ENCODE measurements at regions of chr15 and their contacts with region 1.

Region 1: GRCh38 chr15:68672781-68673205 is 94.0 kb downstream of the CORO2B start:
- DNase-seq: no peak
- H3K4me3 Mint-ChIP-seq: no peak overlapping the region
- H3K27ac Mint-ChIP-seq: no peak overlapping the region
- H3K4me1 Mint-ChIP-seq: peaks cover 8% of the 10 kb centered on the region
- H3K27me3 Mint-ChIP-seq: no peaks in the 10 kb centered on the region
- CTCF ChIP-seq: no peak

Region 2: DNA sequence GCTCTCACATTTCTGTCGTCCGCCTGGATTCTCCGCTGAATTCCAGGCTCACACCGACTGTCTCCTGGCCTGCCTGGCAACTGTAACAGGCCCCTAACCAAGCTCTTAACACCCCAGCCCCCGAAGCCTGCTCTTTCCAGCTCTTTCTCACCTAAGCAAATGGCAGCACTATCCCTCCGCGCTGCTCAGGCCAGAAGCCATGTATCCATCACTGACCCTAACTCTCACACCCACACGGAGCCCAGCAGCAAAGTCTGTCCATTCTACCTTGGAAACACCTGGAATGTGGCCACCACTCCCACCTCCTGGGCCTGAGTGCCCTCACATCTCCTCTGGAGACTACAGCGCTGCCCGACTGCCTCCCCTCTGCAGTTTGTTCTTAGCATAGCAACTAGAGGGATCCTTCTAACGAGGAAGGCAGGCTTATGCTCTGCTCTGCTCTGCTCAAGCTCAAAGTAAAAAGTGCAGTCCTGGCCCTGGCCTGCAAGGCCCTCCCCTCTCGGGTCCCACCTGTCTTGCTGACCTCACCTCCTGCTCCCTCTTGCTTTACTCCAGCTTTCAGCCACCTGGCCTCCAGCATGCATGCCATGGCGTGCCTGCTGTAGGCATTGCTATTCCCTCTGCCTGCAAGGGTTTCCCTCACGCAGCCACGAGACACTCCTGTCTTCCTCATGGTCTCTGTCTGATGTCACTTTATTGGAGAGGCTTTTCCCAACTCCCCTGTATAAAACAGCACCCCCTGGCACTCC is 368.0 kb before region 1 on chr15:
- CTCF ChIA-PET with region 1: interaction called, 10 read pairs
- POLR2A ChIA-PET with region 1: interaction called, 4 read pairs
- intact Hi-C with region 1: loop called (anchors 1 kb)
- DNase-seq: no peak
- H3K4me3 Mint-ChIP-seq: no peak overlapping the region
- H3K27ac Mint-ChIP-seq: peak overlapping the region; percentile 36
- H3K4me1 Mint-ChIP-seq: peaks cover 19% of the 10 kb centered on the region
- H3K27me3 Mint-ChIP-seq: no peaks in the 10 kb centered on the region
- CTCF ChIP-seq: no peak

Region 3: GRCh38 chr15:68559345-68560310 is 113.2 kb before region 1 on chr15:
- CTCF ChIA-PET with region 1: interaction called, 121 read pairs
- POLR2A ChIA-PET with region 1: interaction called, 8 read pairs
- intact Hi-C with region 1: loop called (anchors 1 kb)
- DNase-seq: peak; percentile 67
- H3K4me3 Mint-ChIP-seq: peak overlapping the region; percentile 70
- H3K27ac Mint-ChIP-seq: no peak overlapping the region
- H3K4me1 Mint-ChIP-seq: peaks cover 6% of the 10 kb centered on the region
- H3K27me3 Mint-ChIP-seq: no peaks in the 10 kb centered on the region
- CTCF ChIP-seq: peak; percentile 94

Region 4: GRCh38 chr15:68578174-68578979 is 94.4 kb before region 1 on chr15:
- CTCF ChIA-PET with region 1: interaction called, 11 read pairs
- POLR2A ChIA-PET with region 1: no interaction called
- intact Hi-C with region 1: loop called (anchors 5 kb)
- DNase-seq: peak; percentile 39
- H3K4me3 Mint-ChIP-seq: peak overlapping the region; percentile 63
- H3K27ac Mint-ChIP-seq: no peak overlapping the region
- H3K4me1 Mint-ChIP-seq: peaks cover 4% of the 10 kb centered on the region
- H3K27me3 Mint-ChIP-seq: peaks cover 6% of the 10 kb centered on the region
- CTCF ChIP-seq: peak; percentile 25

Region 5: GRCh38 chr15:68691705-68692104 is 18.9 kb after region 1 on chr15:
- CTCF ChIA-PET with region 1: interaction called, 23 read pairs
- POLR2A ChIA-PET with region 1: no interaction called
- intact Hi-C with region 1: no loop called
- DNase-seq: no peak
- H3K4me3 Mint-ChIP-seq: no peak overlapping the region
- H3K27ac Mint-ChIP-seq: no peak overlapping the region
- H3K4me1 Mint-ChIP-seq: no peaks in the 10 kb centered on the region
- H3K27me3 Mint-ChIP-seq: no peaks in the 10 kb centered on the region
- CTCF ChIP-seq: no peak

Region 6: DNA sequence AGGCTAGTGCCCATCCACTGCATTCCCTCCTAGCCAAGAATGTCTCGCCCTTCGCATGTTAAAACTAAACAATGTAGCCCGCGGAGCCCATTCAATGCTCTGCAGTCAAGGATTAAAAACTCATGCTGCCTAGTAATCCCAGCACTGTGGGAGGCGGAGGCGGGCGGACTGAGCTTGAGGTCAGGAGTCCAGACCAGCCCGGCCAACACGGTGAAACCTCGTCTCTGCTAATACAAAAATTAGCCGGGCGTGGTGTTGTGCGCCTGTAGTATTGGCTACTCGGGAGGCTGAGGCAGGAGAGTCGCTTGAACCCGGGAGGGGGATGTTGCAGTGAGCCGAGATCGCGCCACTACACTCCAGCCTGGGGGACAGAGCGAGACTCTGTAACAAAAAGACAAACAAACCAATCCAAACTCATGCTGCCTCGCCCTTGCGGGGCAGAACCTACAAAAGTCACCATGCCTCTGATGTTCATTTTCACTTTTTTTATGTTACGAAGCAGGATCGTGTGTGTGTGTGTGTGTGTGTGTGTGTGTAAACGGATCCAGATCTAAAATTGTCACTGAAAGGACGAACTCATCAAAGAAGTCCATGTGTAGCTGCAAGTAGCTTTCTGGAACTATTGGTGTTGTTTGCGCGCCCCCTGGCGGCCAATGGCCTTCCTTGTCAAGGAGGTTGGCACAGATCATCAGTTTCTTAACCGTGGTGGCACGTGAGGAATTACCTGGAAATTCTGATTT is 202.8 kb after region 1 on chr15:
- CTCF ChIA-PET with region 1: interaction called, 14 read pairs
- POLR2A ChIA-PET with region 1: no interaction called
- intact Hi-C with region 1: loop called (anchors 5 kb)
- DNase-seq: peak; percentile 93
- H3K4me3 Mint-ChIP-seq: peak overlapping the region; percentile 33
- H3K27ac Mint-ChIP-seq: no peak overlapping the region
- H3K4me1 Mint-ChIP-seq: no peaks in the 10 kb centered on the region
- H3K27me3 Mint-ChIP-seq: peaks cover 11% of the 10 kb centered on the region
- CTCF ChIP-seq: peak; percentile 85

Region 7: DNA sequence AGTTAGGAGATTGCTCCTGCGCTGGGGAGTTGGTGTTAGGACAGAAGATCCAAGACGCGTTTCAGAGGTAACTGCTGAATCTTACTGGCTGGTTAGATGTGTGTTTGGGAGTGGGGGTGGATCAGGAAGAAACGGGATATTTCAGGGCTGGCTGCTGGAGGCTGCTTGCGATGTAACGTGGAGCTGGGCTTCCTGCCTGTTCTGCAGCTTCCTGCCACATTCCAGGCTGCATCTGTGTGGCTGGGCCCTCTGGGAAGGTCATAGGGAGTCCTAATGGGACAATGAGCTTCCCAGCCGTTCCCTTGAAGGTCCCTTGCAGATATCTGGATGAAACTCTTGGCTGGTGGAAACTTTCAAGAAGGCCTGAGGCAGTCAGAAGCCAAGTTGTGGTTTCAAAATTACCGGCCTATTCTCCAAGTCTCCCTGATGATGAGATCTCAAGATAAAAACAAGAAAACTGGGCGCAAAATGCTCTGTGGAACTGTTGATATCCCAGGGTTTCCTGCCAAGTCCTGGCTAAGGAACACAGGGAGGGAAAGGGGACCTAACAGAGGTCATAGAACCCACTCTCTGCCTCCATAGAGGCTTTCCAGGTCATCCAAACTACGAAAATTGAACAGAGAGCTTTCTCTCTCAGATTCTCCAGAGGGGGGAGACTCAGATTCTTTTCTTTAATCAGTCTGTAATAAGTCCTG is 408.7 kb after region 1 on chr15:
- CTCF ChIA-PET with region 1: no interaction called
- POLR2A ChIA-PET with region 1: no interaction called
- intact Hi-C with region 1: no loop called
- DNase-seq: no peak
- H3K4me3 Mint-ChIP-seq: no peak overlapping the region
- H3K27ac Mint-ChIP-seq: no peak overlapping the region
- H3K4me1 Mint-ChIP-seq: peaks cover 37% of the 10 kb centered on the region
- H3K27me3 Mint-ChIP-seq: no peaks in the 10 kb centered on the region
- CTCF ChIP-seq: no peak

Measured in MCF 10A (cell line).